HEK293 (cell line): ENCODE measurements at regions of chr5 and their contacts with region 1.

Region 1: DNA sequence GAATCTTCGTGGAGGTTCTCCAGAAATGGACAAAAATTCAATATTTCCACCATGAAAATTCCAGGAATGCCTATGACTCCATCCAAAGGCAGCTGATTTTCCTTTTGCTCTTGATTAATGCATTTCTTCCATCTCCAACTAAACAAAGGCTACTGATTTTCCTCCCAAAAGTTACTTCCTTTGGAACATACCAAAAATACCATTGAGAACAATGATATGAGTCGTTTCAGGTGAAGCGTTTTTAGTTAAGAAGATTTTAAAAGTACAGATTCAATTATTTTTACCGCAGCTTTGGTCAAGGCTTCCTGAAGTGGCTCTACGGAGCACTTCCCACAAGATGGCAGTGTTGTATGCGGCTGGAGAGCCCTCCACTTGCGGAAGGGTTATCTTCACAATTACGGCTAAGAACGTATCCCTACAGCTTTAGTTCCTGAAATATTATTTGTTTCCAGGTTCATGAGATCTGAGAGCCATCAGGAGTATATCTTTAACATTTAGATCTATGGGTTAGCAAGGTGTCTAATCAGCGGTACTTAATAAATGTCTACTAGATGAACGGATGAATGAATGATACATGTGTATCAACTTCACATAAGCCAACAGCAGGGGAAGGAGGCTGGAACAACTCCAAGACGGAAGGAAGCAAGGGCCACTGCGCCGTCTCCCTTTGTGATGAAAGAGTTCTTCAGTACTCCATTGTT is 35.9 kb upstream of the ARSB start:
- H3K4me3 ChIP-seq: no peak overlapping the region
- H3K27ac ChIP-seq: no peak overlapping the region
- H3K4me1 ChIP-seq: peaks cover 5% of the 10 kb centered on the region
- CTCF ChIP-seq: peak; percentile 79

Region 2: GRCh38 chr5:78511121-78511906 is 509.7 kb before region 1 on chr5:
- CTCF ChIA-PET with region 1: no interaction called
- POLR2A ChIA-PET with region 1: no interaction called
- H3K4me3 ChIP-seq: no peak overlapping the region
- H3K27ac ChIP-seq: no peak overlapping the region
- H3K4me1 ChIP-seq: peaks cover 24% of the 10 kb centered on the region
- CTCF ChIP-seq: no peak

Region 3: DNA sequence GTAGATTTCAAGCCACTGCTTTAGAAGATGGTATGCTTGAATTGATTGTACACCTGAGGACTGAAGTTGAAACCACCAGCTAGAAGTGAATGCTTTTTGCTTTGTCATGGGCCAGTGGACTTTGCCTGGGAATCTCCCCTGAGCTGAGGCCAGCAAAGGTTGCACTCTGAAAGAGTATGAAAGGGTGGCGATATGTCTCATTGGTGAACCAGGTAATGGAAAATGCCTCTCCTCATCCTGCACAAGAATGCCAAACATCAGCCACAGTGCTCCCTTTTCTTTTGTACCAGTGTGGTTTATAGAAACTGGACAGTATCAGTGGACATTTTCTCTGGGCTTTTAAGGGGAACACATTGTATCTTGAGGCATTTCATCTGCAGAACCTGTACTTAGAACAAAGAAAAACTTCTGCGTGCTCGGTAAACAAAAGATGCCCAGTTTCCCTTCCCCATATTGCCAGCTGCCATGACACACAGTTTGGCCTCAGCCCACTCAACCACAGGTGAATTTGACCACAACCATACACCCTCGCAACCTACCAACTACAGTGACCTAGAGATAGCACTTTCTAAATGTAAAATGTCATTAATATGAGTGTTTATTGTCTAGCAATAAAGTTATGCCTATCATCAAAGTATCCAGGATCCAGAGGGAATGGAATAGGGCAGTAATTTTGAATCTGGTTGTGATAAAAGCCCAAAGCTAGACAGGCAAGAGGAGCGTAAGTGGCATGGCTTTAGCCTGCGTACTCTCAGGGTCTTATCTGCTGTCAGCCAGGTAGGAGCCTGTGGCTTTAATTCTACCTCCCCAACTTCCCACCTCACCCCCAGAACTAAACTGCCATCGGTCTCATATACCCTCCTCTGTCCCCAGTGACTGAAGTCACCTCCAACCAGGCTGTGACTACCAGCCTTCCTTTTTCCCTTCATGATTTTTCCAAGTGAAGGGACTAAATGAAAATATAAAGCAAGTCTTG is 292.9 kb before region 1 on chr5:
- CTCF ChIA-PET with region 1: no interaction called
- POLR2A ChIA-PET with region 1: no interaction called
- H3K4me3 ChIP-seq: no peak overlapping the region
- H3K27ac ChIP-seq: no peak overlapping the region
- H3K4me1 ChIP-seq: no peaks in the 10 kb centered on the region
- CTCF ChIP-seq: no peak

Region 4: DNA sequence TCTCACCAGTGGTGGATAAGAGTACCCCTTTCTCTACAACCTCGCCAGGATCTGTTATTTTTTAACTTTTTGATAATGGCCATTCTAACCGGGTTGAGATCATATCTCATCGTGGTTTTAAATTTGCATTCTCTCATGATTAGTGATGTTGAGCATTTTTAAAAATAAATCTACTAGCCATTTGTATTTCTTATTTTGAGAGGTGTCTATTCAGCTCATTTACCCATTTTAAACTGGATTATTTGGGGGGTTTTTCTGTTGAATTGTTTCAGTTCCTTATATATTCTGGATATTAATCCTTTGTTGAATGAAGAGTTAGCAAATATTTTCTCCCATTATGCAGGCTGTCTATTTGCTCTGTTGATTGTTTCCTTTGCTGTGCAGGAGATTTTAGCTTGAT is 175.5 kb before region 1 on chr5:
- CTCF ChIA-PET with region 1: no interaction called
- POLR2A ChIA-PET with region 1: no interaction called
- H3K4me3 ChIP-seq: no peak overlapping the region
- H3K27ac ChIP-seq: no peak overlapping the region
- H3K4me1 ChIP-seq: no peaks in the 10 kb centered on the region
- CTCF ChIP-seq: no peak

Region 5: GRCh38 chr5:78984439-78985115 is 36.4 kb before region 1 on chr5:
- CTCF ChIA-PET with region 1: interaction called, 10 read pairs
- POLR2A ChIA-PET with region 1: interaction called, 3 read pairs
- H3K4me3 ChIP-seq: peak overlapping the region; percentile 81
- H3K27ac ChIP-seq: peak overlapping the region; percentile 98
- H3K4me1 ChIP-seq: peaks cover 8% of the 10 kb centered on the region
- CTCF ChIP-seq: peak; percentile 44

Region 6: DNA sequence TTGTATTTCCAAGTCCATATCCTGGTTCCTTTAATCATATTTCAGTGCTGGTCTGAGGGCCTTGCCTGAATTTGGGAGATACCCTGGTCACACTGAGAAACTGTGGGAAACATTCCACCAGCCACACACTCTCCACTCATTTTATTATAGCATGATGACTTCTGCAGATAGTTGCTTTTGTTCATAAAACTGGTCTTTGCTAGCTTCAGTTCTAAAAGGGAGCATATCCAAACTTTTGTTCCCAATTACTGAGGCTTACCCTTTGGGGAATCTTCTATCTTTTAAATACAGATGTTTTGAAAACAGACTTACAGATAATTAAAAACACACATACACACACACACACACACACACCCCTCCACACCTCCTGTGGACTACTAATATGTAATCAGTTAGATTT is 27.4 kb after region 1 on chr5:
- CTCF ChIA-PET with region 1: interaction called, 11 read pairs
- POLR2A ChIA-PET with region 1: no interaction called
- H3K4me3 ChIP-seq: no peak overlapping the region
- H3K27ac ChIP-seq: no peak overlapping the region
- H3K4me1 ChIP-seq: no peaks in the 10 kb centered on the region
- CTCF ChIP-seq: no peak

Region 7: GRCh38 chr5:79122973-79123372 is 102.0 kb after region 1 on chr5:
- CTCF ChIA-PET with region 1: interaction called, 18 read pairs
- POLR2A ChIA-PET with region 1: no interaction called
- H3K4me3 ChIP-seq: no peak overlapping the region
- H3K27ac ChIP-seq: no peak overlapping the region
- H3K4me1 ChIP-seq: no peaks in the 10 kb centered on the region
- CTCF ChIP-seq: no peak

Region 8: GRCh38 chr5:79464695-79465332 is 443.8 kb after region 1 on chr5:
- CTCF ChIA-PET with region 1: interaction called, 58 read pairs
- POLR2A ChIA-PET with region 1: no interaction called
- H3K4me3 ChIP-seq: no peak overlapping the region
- H3K27ac ChIP-seq: no peak overlapping the region
- H3K4me1 ChIP-seq: no peaks in the 10 kb centered on the region
- CTCF ChIP-seq: peak; percentile 45

Region 9: DNA sequence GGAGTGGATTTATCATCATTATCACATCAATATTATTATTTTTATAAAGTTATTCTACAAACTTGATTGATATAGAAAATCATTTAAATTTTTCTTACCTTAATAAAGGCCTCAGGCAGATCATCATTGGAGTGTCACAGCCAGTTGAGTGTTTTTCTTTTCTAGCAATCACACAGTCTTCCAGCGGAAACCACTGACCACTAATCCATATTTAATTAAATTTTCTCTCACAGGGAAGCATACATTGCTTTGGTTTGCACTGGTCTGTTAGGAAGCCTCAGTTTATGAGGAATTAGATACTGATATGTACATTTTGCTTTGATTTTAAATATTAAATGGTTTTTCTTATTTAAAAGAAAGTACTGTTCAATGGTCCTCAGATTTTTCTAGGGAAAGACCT is 1305.5 kb after region 1 on chr5:
- CTCF ChIA-PET with region 1: no interaction called
- POLR2A ChIA-PET with region 1: no interaction called
- H3K4me3 ChIP-seq: no peak overlapping the region
- H3K27ac ChIP-seq: no peak overlapping the region
- H3K4me1 ChIP-seq: no peaks in the 10 kb centered on the region
- CTCF ChIP-seq: no peak